ENCODE measurements at regions of chr19 and their contacts with region 1.

Region 1: DNA sequence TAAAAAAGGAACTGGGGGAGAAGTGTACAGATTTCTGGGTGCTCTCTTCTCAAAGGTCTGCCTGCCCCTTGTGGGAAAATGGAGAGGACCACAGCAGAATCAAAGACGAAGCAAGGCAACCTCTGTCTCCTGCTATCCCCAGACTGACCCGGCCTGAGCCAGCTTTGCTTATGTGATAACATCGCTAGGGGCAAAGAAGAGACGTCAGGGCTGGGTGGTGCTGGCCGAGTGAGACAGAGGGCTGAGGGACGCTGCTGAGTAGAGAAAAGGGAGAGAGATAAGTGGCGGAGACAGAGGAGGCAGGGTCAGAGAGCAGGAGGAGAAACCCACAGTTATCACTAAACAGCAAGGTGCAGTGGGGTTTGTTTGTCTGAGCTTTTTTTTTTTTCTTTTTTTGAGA is 4.6 kb upstream of the MUC16 start:
- DNase-seq: no peak
- ATAC-seq: no peak
- H3K4me3 ChIP-seq: no peak overlapping the region
- H3K27ac ChIP-seq: peak overlapping the region; percentile 44; the same call in 1 of the 2 replicates
- H3K4me1 ChIP-seq: peaks cover 4% of the 10 kb centered on the region
- H3K27me3 ChIP-seq: no peaks in the 10 kb centered on the region
- CTCF ChIP-seq: no peak

Region 2: GRCh38 chr19:8575467-8575997 is 439.3 kb before region 1 on chr19:
- CTCF ChIA-PET with region 1: no interaction called
- POLR2A ChIA-PET with region 1: no interaction called
- in situ Hi-C with region 1: no loop called
- intact Hi-C with region 1: no loop called
- DNase-seq: no peak
- ATAC-seq: no peak
- H3K4me3 ChIP-seq: no peak overlapping the region
- H3K27ac ChIP-seq: no peak overlapping the region
- H3K4me1 ChIP-seq: no peaks in the 10 kb centered on the region
- H3K27me3 ChIP-seq: no peaks in the 10 kb centered on the region
- CTCF ChIP-seq: no peak

Region 3: GRCh38 chr19:8973501-8974091 is 41.2 kb before region 1 on chr19:
- CTCF ChIA-PET with region 1: no interaction called
- POLR2A ChIA-PET with region 1: no interaction called
- in situ Hi-C with region 1: no loop called
- intact Hi-C with region 1: no loop called
- DNase-seq: no peak
- ATAC-seq: no peak
- H3K4me3 ChIP-seq: no peak overlapping the region
- H3K27ac ChIP-seq: no peak overlapping the region
- H3K4me1 ChIP-seq: no peaks in the 10 kb centered on the region
- H3K27me3 ChIP-seq: no peaks in the 10 kb centered on the region
- CTCF ChIP-seq: no peak

Region 4: GRCh38 chr19:8988204-8988603 is 26.6 kb before region 1 on chr19:
- CTCF ChIA-PET with region 1: no interaction called
- POLR2A ChIA-PET with region 1: interaction called, 10 read pairs
- in situ Hi-C with region 1: no loop called
- intact Hi-C with region 1: no loop called
- DNase-seq: no peak
- ATAC-seq: no peak
- H3K4me3 ChIP-seq: no peak overlapping the region
- H3K27ac ChIP-seq: no peak overlapping the region
- H3K4me1 ChIP-seq: no peaks in the 10 kb centered on the region
- H3K27me3 ChIP-seq: no peaks in the 10 kb centered on the region
- CTCF ChIP-seq: peak; percentile 47

Region 5: GRCh38 chr19:8998938-8999337 is 15.9 kb before region 1 on chr19:
- CTCF ChIA-PET with region 1: no interaction called
- POLR2A ChIA-PET with region 1: no interaction called
- in situ Hi-C with region 1: no loop called
- intact Hi-C with region 1: no loop called
- DNase-seq: no peak
- ATAC-seq: no peak
- H3K4me3 ChIP-seq: no peak overlapping the region
- H3K27ac ChIP-seq: no peak overlapping the region
- H3K4me1 ChIP-seq: no peaks in the 10 kb centered on the region
- H3K27me3 ChIP-seq: no peaks in the 10 kb centered on the region
- CTCF ChIP-seq: no peak

Region 6: GRCh38 chr19:9058905-9059631 is 44.3 kb after region 1 on chr19:
- CTCF ChIA-PET with region 1: no interaction called
- POLR2A ChIA-PET with region 1: no interaction called
- in situ Hi-C with region 1: no loop called
- intact Hi-C with region 1: no loop called
- DNase-seq: no peak
- ATAC-seq: no peak
- H3K4me3 ChIP-seq: no peak overlapping the region
- H3K27ac ChIP-seq: peak overlapping the region; percentile 57
- H3K4me1 ChIP-seq: peaks cover 22% of the 10 kb centered on the region
- H3K27me3 ChIP-seq: no peaks in the 10 kb centered on the region
- CTCF ChIP-seq: no peak